MCF 10A (cell line): ENCODE measurements at regions of chr1 and their contacts with region 1.

Region 1: GRCh38 chr1:173714759-173715537 is at the start of gene KLHL20:
- DNase-seq: peak; percentile 97
- H3K4me3 Mint-ChIP-seq: peak within 1 kb of the TSS; percentile 80
- H3K27ac Mint-ChIP-seq: peak within 1 kb of the TSS; percentile 87
- H3K4me1 Mint-ChIP-seq: peaks cover 7% of the 10 kb centered on the region
- H3K27me3 Mint-ChIP-seq: peaks cover 12% of the 10 kb centered on the region
- CTCF ChIP-seq: no peak
- total RNA-seq, gene KLHL20: 36.7 and 44.3 TPM in 2 replicates

Region 2: DNA sequence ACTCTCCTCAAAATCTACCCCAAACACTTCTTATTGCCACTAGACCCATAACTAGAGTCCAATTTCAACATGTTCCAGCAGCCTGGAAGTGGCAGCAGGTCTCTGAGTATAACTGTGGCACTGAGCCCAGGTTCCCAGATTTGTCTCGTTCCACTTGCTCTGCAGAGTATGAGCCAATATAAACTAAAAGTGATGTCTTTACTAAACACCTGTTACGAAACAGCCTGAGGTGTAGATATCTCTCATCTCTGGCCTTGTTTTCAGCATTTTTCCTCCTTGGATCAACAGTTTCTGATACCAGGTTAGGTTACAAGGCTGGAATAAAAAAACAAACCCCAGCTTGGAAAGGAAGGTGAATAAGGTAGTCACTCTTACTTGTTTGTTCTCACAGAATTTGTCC is 263.0 kb before region 1 on chr1:
- CTCF ChIA-PET with region 1: interaction called, 5 read pairs
- POLR2A ChIA-PET with region 1: interaction called, 25 read pairs
- intact Hi-C with region 1: no loop called
- DNase-seq: peak; percentile 91
- H3K4me3 Mint-ChIP-seq: no peak overlapping the region
- H3K27ac Mint-ChIP-seq: peak overlapping the region; percentile 14
- H3K4me1 Mint-ChIP-seq: peaks cover 23% of the 10 kb centered on the region
- H3K27me3 Mint-ChIP-seq: no peaks in the 10 kb centered on the region
- CTCF ChIP-seq: no peak

Region 3: DNA sequence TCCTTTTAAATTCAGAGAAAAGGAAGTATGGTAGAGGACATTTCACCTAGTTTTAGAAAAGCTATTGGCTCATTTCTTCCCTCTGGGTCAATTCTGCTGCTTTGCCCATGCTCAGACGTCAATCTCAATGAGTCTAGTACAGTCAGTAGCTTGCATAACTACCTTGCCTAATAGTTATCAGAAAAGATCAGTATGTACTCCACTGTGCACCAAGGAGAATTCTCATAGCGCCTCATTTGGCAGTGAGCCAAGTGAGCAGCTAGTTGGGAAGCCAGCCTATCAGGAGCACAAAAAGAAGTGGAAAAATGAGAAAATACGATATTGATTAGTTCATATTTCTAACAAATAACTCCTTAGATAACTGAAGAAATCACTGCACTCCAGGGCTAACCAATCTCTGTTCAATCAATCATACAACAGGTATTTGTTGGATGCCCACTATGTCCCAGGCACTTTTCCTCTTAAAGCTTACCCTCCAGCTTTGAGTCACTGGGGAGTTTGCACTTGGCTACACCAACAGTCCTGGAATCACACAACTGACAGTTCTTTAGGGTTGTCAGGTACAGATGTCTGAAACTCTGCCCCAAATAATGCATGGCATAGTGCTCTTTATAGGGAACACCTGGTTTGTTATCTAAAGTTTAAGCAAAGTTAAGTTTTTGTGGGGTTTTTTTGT is 187.7 kb before region 1 on chr1:
- CTCF ChIA-PET with region 1: interaction called, 5 read pairs
- POLR2A ChIA-PET with region 1: interaction called, 47 read pairs
- intact Hi-C with region 1: no loop called
- DNase-seq: peak; percentile 95
- H3K4me3 Mint-ChIP-seq: peak overlapping the region; percentile 37
- H3K27ac Mint-ChIP-seq: peak overlapping the region; percentile 63
- H3K4me1 Mint-ChIP-seq: peaks cover 28% of the 10 kb centered on the region
- H3K27me3 Mint-ChIP-seq: no peaks in the 10 kb centered on the region
- CTCF ChIP-seq: no peak

Region 4: DNA sequence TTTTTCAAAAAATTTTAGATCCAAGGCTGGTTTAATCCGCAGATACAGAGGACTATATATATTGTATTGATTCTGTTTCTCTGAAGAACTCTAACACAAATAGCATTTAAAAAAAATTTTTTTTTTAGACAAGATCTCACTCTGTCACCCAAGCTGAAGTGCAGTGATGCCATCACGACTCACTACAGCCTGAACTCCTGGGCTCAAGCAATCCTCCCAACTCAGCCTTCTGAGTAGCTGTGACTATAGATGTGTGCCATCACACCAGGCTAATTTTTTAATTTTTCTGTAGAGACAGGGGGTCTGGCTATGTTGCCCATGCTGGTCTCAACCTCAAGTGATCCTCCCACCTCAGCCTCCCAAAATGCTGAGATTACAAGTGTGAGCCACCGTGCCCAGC is 48.3 kb before region 1 on chr1:
- CTCF ChIA-PET with region 1: interaction called, 3 read pairs
- POLR2A ChIA-PET with region 1: interaction called, 28 read pairs
- intact Hi-C with region 1: no loop called
- DNase-seq: peak; percentile 30
- H3K4me3 Mint-ChIP-seq: no peak overlapping the region
- H3K27ac Mint-ChIP-seq: no peak overlapping the region
- H3K4me1 Mint-ChIP-seq: peaks cover 6% of the 10 kb centered on the region
- H3K27me3 Mint-ChIP-seq: no peaks in the 10 kb centered on the region
- CTCF ChIP-seq: no peak

Region 5: DNA sequence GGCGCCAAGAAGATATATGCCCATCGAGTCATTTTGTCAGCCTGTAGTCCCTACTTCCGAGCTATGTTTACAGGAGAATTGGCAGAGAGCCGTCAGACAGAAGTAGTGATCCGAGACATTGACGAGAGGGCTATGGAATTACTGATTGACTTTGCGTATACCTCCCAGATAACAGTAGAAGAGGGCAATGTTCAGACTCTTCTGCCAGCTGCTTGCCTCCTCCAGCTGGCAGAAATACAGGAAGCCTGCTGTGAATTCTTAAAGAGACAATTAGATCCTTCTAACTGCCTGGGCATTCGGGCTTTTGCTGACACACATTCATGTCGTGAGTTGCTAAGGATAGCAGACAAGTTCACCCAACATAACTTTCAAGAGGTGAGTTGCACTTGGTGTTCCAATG is 19.0 kb after region 1 on chr1:
- CTCF ChIA-PET with region 1: no interaction called
- POLR2A ChIA-PET with region 1: interaction called, 10 read pairs
- intact Hi-C with region 1: no loop called
- DNase-seq: no peak
- H3K4me3 Mint-ChIP-seq: no peak overlapping the region
- H3K27ac Mint-ChIP-seq: no peak overlapping the region
- H3K4me1 Mint-ChIP-seq: no peaks in the 10 kb centered on the region
- H3K27me3 Mint-ChIP-seq: no peaks in the 10 kb centered on the region
- CTCF ChIP-seq: no peak